CD4-positive, alpha-beta T cell (primary cell): ENCODE measurements at regions of chr5 and their contacts with region 1.

Region 1: DNA sequence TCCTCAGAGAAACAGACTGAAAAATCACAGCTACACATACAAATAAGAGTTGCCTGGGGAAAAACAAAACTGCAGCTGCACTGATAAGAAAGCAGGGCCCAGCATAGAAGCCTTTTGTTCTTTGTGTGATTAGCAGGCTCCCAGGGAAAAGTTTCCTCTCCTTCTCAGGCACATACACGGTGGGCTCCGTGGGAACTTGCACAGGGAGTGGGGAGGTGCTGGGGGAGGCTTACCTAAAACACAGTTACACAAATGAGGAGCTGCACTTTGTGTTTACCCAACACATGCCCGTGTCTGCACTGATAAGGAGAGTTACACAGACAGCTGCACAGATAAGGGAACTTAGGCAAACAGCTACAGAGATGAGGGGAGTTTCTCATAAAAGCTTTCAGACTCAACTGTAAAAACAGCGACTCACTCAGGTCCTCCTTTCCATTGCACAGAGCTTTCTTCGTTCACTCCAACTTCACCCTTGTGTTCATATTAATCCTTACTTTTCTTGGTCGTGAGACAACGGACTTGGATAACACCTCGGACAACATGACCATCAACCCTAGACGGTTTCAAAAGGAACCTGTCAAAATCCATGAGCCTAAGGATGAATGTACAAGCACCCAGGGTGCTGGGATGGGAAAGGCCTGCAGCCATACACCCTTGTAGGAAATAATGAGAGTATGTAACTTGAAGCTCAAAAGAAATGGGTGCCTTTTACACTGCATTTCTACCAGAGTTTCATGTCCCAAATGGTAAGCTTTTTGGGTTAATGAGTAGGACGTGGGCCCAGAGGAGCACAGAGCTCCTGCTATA is 50.8 kb downstream of the SERINC5 start:
- DNase-seq: peak in 2 of 14 experiments; percentile 51 to 63
- ATAC-seq: peak; percentile 87
- H3K4me3 ChIP-seq: no peak overlapping the region
- H3K4me3 Mint-ChIP-seq: peak overlapping the region; percentile 65
- H3K27ac ChIP-seq: peak overlapping the region; percentile 47 to 61
- H3K27ac Mint-ChIP-seq: peak overlapping the region; percentile 80
- H3K4me1 ChIP-seq: peaks cover 64% of the 10 kb centered on the region
- H3K4me1 Mint-ChIP-seq: peaks cover 92% of the 10 kb centered on the region
- H3K27me3 ChIP-seq: no peaks in the 10 kb centered on the region
- H3K27me3 Mint-ChIP-seq: no peaks in the 10 kb centered on the region
- CTCF ChIP-seq: no peak

Region 2: DNA sequence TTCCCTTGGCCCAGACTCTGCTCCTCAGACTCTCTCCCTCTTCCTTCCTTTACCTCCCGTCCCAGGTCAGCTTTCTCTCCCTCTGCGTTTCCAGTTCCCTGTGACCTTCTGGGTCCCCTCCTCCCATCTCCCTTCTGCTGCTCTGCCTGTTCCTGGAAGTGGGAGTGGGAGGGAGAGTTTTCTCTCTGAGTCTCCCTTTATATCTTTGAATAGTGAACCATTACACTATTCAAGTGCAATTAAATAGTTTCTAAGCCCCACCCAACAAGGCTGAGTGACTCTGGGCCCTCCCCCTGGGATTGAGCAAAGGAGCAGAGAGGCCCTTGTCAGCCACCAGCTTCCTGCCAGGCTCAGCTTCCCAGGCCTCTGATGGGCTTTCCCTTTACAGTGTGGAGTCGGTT is 135.1 kb before region 1 on chr5:
- CTCF ChIA-PET with region 1: no interaction called
- POLR2A ChIA-PET with region 1: no interaction called
- intact Hi-C with region 1: no loop called
- DNase-seq: no peak
- ATAC-seq: no peak
- H3K4me3 ChIP-seq: no peak overlapping the region
- H3K4me3 Mint-ChIP-seq: no peak overlapping the region
- H3K27ac ChIP-seq: no peak overlapping the region
- H3K27ac Mint-ChIP-seq: no peak overlapping the region
- H3K4me1 ChIP-seq: no peaks in the 10 kb centered on the region
- H3K4me1 Mint-ChIP-seq: no peaks in the 10 kb centered on the region
- H3K27me3 ChIP-seq: no peaks in the 10 kb centered on the region
- H3K27me3 Mint-ChIP-seq: no peaks in the 10 kb centered on the region
- CTCF ChIP-seq: no peak

Region 3: GRCh38 chr5:80216753-80217596 is 12.0 kb after region 1 on chr5:
- CTCF ChIA-PET with region 1: interaction called, 8 read pairs
- POLR2A ChIA-PET with region 1: interaction called, 34 read pairs
- intact Hi-C with region 1: no loop called
- DNase-seq: peak in 2 of 14 experiments; percentile 18 to 54
- ATAC-seq: no peak
- H3K4me3 ChIP-seq: no peak overlapping the region
- H3K4me3 Mint-ChIP-seq: peak overlapping the region; percentile 67
- H3K27ac ChIP-seq: peak overlapping the region in 1 of 2 donors; percentile 8
- H3K27ac Mint-ChIP-seq: peak overlapping the region; percentile 96
- H3K4me1 ChIP-seq: peaks cover 81% of the 10 kb centered on the region
- H3K4me1 Mint-ChIP-seq: peaks cover 95% of the 10 kb centered on the region
- H3K27me3 ChIP-seq: no peaks in the 10 kb centered on the region
- H3K27me3 Mint-ChIP-seq: no peaks in the 10 kb centered on the region
- CTCF ChIP-seq: no peak